ENCODE measurements at regions of chr11 and their contacts with region 1.

Region 1: DNA sequence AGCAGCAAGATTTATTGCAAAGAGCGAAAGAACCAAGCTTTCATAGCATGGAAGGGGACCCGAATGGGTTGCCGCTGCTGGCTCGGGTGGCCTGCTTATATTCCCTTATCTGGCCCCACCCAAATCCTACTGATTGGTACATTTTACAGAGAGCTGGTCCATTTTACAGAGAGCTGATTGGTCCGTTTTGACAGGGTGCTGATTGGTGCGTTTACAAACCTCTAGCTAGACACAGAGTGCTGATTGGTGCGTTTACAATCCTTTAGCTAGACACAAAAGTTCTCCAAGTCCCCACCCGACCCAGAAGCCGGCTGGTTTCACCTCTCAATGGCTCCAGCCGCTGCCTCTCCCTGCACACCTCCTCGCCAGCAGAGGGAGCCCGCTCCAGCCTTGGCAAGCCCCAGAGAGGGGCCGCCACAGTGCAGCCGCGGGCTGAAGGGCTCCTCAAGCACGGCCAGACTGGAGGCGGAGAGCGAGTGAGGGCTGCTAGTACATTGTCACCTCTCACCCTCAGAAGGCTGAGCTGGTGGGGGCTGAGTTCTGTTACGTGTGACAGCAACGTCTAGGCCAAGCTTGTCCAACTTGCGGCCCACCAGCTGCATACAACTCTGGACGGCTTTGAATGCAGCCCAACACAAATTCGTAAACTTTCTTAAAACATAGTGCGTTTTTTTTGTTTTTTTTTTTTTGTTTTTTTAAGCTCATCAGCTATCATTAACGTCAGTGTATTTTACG is 8.7 kb downstream of the PTH start:
- DNase-seq: peak; percentile 15 to 80
- ATAC-seq: peak; percentile 98 to 99
- H3K4me3 ChIP-seq: peak overlapping the region; percentile 50
- H3K27ac ChIP-seq: peak overlapping the region; percentile 52 to 55; a peak in 4 of 6 replicates
- H3K4me1 ChIP-seq: no peaks in the 10 kb centered on the region
- CTCF ChIP-seq: peak; percentile 55
- EP300 ChIP-seq: no peak
- POLR2A ChIP-seq: peak; percentile 34
- RAD21 ChIP-seq: peak in 1 of 2 experiments; percentile 36; a peak in 3 of 5 replicates

Region 2: DNA sequence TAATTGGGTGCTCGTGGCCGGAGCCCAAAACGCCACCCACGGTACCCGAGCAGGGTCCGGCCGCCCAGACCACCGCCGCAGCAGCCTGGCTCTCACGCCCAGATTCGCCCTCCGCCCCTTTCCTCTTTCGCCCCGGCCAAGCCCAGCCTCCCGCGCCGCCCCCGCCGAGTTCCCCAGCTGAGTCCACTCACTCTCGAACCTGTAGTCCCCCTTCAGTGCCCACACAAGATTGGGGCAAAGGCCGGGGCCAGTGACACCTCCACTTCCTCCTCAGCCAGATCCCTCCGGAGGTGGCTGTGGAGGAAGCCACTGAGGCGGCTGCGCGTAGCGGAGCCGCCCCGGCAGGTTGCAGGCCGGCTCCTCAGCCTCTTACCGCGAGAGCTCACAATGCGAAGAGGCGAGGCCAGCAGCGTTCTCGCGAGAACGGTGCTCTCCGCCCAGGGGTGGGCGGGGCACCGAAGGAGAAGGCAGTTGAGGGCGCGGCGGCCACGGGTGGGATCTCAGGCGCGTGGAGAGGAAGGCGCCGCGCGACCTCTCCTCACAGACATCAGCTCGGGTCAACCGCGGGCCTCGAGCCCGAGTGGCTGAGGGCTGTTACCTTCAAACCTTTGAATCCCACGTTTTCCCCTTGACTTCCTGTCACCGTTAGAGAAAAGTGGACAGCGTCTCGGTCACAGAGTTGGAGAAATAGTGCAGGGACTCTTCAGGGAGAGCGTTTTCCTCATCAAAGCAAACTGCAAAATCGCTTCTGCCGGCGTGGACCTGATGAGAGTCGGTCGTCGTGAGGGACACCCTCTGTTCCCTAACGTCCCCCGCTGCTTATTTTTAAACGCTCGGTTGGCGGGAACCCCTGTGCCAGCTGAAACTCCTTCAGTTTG is 24.0 kb before region 1 on chr11 and contains the start of gene BTBD10:
- CTCF ChIA-PET with region 1: interaction called, 18 read pairs
- POLR2A ChIA-PET with region 1: no interaction called
- DNase-seq: peak; percentile 86 to 95
- ATAC-seq: peak; percentile 98
- H3K4me3 ChIP-seq: peak within 1 kb of the TSS; percentile 84
- H3K27ac ChIP-seq: peak within 1 kb of the TSS; percentile 91 to 94
- H3K4me1 ChIP-seq: peaks cover 13% of the 10 kb centered on the region
- CTCF ChIP-seq: no peak
- EP300 ChIP-seq: no peak
- POLR2A ChIP-seq: peak; percentile 96
- RAD21 ChIP-seq: no peak; a peak in 1 of 5 replicates
- polyA plus RNA-seq, gene BTBD10: 54.2 and 60.3 TPM in 2 replicates

Region 3: GRCh38 chr11:13473013-13473722 is 13.9 kb before region 1 on chr11:
- CTCF ChIA-PET with region 1: interaction called, 18 read pairs
- POLR2A ChIA-PET with region 1: no interaction called
- DNase-seq: no peak
- ATAC-seq: no peak
- H3K4me3 ChIP-seq: no peak overlapping the region
- H3K27ac ChIP-seq: no peak overlapping the region
- H3K4me1 ChIP-seq: 0 out of 3 replicates have a peak, but pooled peaks cover 6% of the 10 kb centered on the region
- CTCF ChIP-seq: no peak
- EP300 ChIP-seq: no peak
- POLR2A ChIP-seq: no peak
- RAD21 ChIP-seq: no peak